Heart left ventricle (tissue), 16 donors: ENCODE measurements at regions of chr7 and their contacts with region 1.

Region 1: GRCh38 chr7:136339464-136339863 is 362.3 kb upstream of the MTPN start:
- DNase-seq: no peak
- ATAC-seq: no peak
- H3K4me3 ChIP-seq: no peak overlapping the region
- H3K27ac ChIP-seq: no peak overlapping the region
- H3K4me1 ChIP-seq: no peaks in the 10 kb centered on the region
- H3K27me3 ChIP-seq: no peaks in the 10 kb centered on the region
- CTCF ChIP-seq: no peak
- POLR2A ChIP-seq: no peak

Region 2: GRCh38 chr7:136194878-136195277 is 144.6 kb before region 1 on chr7:
- intact Hi-C with region 1: loop called in 1 of 10 experiments (anchors 5 kb)
- DNase-seq: no peak
- ATAC-seq: no peak
- H3K4me3 ChIP-seq: no peak overlapping the region
- H3K27ac ChIP-seq: no peak overlapping the region
- H3K4me1 ChIP-seq: no peaks in the 10 kb centered on the region
- H3K27me3 ChIP-seq: no peaks in the 10 kb centered on the region
- CTCF ChIP-seq: no peak
- POLR2A ChIP-seq: no peak

Region 3: GRCh38 chr7:136783934-136784333 is 444.5 kb after region 1 on chr7:
- intact Hi-C with region 1: no loop called
- DNase-seq: no peak
- ATAC-seq: no peak
- H3K4me3 ChIP-seq: no peak overlapping the region
- H3K27ac ChIP-seq: no peak overlapping the region
- H3K4me1 ChIP-seq: no peaks in the 10 kb centered on the region
- H3K27me3 ChIP-seq: no peaks in the 10 kb centered on the region
- CTCF ChIP-seq: no peak
- POLR2A ChIP-seq: no peak